ENCODE measurements at regions of chr2 and their contacts with region 1.

Region 1: DNA sequence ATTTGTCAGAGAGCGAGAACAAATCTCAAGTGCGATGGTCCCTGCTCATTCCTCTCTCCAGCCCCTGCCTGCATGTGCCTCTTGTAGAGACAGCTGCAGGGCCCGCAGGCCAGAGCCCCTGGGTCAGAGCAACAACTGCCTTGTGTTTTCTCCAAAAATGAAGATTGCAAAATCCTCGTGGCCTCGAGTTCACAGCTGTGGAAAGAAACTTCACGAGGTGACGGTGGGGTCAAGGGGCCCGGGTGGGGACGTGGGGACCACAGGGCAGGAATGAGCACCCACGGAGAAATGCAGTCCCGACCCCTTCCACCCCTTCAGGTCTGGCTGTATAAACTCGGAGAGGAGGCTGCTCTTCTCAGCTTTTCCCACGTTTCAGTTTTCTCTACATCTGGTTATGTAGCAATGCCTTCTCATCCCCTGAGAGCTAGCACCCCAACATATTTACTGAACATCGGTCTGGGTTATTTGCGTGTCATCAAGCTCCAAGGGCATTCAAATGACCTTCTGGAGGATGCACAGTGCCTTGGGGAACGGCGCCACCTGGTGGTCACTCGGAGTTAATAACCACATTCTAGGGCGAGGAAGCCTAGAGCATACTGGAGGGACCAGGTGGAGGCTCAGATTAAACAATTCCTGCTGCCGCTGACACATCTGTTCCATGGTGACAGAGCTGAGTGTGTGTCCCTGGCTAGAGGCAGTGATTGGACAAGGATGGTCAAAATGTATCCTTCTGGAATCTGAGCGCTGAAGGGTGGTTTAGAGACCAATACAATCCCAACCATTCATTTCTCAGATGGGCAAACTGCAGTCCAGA is 91.4 kb upstream of the CYRIA start:
- DNase-seq: peak; percentile 72

Region 2: GRCh38 chr2:16613539-16614011 is 143.5 kb before region 1 on chr2:
- CTCF ChIA-PET with region 1: interaction called, 41 read pairs
- POLR2A ChIA-PET with region 1: no interaction called
- DNase-seq: peak; percentile 13